Motor neuron (in vitro differentiated cells): ENCODE measurements at regions of chr4 and their contacts with region 1.

Region 1: DNA sequence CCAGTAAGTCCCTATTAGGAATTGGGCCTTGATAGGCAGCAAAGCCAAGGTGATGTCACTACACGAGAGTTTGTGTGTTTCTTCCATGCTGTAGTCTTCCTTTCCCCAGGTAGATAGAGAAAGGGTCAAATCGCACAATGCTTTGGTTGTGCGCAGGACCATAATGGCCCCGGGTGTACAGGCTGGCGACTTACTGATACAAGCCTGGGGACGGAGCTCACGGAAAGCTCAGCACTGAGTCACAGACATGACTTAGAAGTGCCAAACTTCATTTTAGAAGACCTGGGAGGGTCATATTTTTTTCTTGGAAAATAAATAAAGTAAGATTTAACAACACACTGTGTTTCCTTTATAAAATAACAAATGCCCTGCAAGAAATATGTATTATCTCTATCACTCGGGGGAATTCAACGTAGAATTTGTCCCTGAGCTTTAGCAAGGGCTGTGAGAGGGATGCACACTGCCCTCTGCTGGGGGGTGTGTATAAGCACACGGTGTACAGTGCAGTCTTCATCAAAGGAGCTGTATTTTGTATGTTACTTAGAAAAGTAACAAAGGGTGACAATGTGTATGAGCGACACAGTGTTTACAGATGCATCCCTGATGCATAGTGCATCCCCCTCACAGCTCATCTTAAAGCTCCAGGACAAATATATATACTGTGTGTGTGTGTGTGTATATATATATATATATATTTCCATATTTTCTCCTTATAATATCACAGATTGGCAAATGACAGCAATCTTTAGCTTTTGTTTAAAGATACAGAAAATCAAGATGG is 254.5 kb upstream of the VEGFC start:
- ATAC-seq: peak; percentile 73 to 98 (median 84)
- H3K4me3 ChIP-seq: no peak overlapping the region
- H3K27ac ChIP-seq: no peak overlapping the region
- H3K4me1 ChIP-seq: no peaks in the 10 kb centered on the region

Region 2: DNA sequence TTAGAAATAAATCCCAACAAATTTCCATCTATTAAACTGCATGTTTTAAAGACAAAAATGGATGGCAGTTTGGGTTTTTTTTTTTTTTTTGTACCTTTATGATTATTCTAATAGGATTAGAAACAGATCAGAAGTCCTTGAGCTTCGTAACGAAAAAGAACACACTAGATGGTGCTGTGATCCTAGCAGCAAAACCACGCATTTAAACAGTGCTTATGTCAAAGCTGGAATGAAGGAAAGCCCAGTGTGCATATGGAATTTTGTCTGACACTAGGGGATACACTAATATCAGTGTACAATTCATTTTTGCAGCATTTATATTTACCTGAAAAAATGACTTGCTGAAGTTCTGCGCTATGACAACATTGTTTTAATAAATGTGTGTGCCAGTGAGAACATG is 483.7 kb before region 1 on chr4:
- in situ Hi-C with region 1: loop called in 2 of 9 experiments (anchors 25 kb)
- ATAC-seq: peak; percentile 37 to 79 (median 62)
- H3K4me3 ChIP-seq: no peak overlapping the region
- H3K27ac ChIP-seq: no peak overlapping the region
- H3K4me1 ChIP-seq: peaks cover 0 to 7% of the 10 kb centered on the region in 2 donors

Region 3: GRCh38 chr4:177862541-177863176 is 815.4 kb after region 1 on chr4:
- in situ Hi-C with region 1: no loop called
- ATAC-seq: no peak
- H3K4me3 ChIP-seq: no peak overlapping the region
- H3K27ac ChIP-seq: no peak overlapping the region
- H3K4me1 ChIP-seq: no peaks in the 10 kb centered on the region